Activated CD8-positive, alpha-beta T cell treated with anti-CD3 and anti-CD28 coated beads for 36 hours (primary cell): ENCODE measurements at regions of chr16 and their contacts with region 1.

Region 1: DNA sequence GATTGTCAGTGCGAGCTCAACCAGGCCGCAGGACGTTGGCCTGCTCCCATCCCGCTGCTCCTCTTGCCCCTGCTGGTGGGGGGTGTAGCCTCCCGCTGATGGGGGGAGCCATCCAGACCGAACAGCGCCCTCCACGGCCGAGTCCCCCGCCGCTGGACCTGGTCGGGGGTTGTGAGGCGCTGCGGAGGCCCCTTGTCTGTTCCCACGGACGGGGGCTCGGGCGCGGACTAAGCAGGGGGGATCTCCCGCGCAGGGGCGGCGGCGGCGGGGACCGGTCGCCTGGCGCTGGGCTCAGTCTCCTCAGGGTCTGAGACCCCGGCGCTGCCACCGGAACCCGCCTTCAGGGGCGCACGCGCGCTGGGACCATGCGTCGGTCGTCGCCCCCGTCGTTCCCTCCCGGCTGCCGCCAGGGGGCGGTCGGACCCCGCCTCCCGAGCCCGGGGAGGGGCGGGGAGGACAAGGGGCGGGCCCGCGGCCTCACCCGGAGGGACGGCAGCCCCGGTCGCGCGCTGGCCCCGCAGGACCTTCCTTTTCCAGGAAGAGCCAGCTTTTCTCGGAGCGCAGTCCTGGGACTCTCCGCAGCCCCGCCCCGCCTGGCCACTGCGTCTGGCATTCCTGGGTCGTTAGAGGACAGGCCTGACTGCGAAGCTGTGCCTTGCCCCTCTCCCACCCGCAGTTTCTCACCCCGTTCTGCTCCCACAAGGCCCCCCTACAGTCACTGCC is 6.3 kb upstream of the IL32 start:
- DNase-seq: peak; percentile 87
- ATAC-seq: peak; percentile 86
- H3K4me3 Mint-ChIP-seq: peak overlapping the region; percentile 82
- H3K27ac Mint-ChIP-seq: peak overlapping the region; percentile 93
- H3K4me1 Mint-ChIP-seq: peaks cover 57% of the 10 kb centered on the region
- H3K27me3 Mint-ChIP-seq: no peaks in the 10 kb centered on the region
- CTCF ChIP-seq: peak; percentile 98

Region 2: DNA sequence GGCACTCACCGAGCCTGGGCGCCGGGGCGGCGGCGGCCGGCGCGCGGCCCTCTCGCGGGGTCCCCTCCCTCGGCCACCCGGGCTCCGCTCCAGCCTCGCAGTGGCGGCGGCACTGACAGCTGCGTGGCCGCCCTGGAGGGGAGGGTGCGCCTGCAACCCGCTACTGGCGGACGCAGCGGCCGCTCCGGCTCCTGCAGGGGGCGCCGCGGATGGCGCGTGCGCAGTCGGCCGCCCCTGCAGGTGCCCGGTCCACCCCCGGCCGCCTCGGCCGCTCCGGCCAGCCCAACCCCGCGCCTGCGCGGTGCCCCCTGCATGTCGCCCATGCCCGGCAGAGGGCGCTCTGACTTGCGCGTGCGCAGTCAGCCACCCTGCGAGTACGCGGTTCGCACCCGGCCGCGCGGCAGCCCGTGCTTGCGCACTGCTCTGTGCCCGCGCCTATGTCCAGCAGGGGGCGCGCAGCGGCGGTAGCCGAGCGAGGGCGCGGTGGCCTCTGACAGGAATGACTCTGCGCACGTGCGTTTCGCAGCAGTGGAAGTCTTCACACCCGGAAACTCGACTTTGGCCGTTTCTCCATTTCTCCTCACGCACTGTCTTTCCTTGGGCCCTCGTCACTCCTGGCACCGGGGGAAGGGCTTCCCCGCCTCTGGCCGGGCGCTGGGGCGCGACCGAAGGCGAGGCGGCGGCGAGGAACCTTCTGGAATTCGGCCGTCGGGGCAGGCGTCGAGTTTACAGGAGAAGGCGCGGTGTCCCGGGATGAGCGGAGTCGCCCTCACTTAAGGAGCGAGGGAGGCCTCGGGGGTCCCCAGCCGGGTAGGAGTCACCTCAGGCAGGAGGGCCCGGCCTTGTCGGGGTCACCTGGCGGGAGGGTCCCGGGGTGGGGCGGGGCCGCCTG is 718.4 kb before region 1 on chr16 and contains the start of gene ABCA3:
- CTCF ChIA-PET with region 1: no interaction called
- POLR2A ChIA-PET with region 1: no interaction called
- intact Hi-C with region 1: no loop called
- DNase-seq: peak; percentile 94
- ATAC-seq: peak; percentile 89
- H3K4me3 Mint-ChIP-seq: peak within 1 kb of the TSS; percentile 78
- H3K27ac Mint-ChIP-seq: peak within 1 kb of the TSS; percentile 59
- H3K4me1 Mint-ChIP-seq: peaks cover 20% of the 10 kb centered on the region
- H3K27me3 Mint-ChIP-seq: peaks cover 8% of the 10 kb centered on the region
- CTCF ChIP-seq: peak; percentile 100
- total RNA-seq, gene ABCA3: 2.9 to 3.6 TPM

Region 3: GRCh38 chr16:3023669-3024478 is 35.3 kb before region 1 on chr16 and contains the starts of genes HCFC1R1 and THOC6:
- CTCF ChIA-PET with region 1: interaction called, 64 read pairs
- POLR2A ChIA-PET with region 1: interaction called, 4 read pairs
- intact Hi-C with region 1: no loop called
- DNase-seq: peak; percentile 99
- ATAC-seq: peak; percentile 70
- H3K4me3 Mint-ChIP-seq: peak within 1 kb of the TSS; percentile 77
- H3K27ac Mint-ChIP-seq: peak within 1 kb of the TSS; percentile 97
- H3K4me1 Mint-ChIP-seq: peaks cover 50% of the 10 kb centered on the region
- H3K27me3 Mint-ChIP-seq: peaks cover 7% of the 10 kb centered on the region
- CTCF ChIP-seq: no peak
- total RNA-seq, gene HCFC1R1: 24.2 to 24.8 TPM
- total RNA-seq, gene THOC6: 55.4 to 56.6 TPM

Region 4: DNA sequence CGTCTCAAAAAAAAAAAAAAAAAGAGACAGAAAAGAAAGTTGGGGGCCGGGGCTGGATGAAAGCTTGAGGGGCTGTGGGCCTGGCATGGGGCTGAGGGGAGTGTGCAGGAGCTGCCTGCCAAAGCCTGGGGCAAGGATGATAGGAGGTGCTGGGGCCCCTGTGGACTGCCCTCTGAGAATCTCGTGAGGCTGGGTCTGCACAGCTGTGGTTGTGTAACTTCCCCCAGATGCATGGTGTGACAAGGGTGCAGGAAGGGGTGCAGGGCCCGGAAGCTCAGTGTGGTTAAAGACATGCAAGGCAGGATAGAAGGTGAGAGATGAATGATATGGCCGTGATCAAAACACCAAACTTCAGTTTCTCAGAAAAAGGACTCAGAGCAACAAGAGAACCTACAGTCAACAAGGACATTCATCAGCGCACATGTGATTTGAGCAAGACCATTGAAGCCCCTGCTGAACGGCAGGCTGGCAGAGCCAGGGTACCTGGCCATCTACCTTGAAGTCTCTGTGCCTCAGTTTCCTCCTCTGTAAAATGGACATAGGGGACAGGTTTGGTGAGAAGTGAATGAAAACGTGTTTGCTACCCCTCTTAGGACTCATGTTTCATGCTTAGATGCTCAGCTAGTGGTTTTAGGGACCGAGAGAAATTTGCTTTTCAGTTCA is 15.8 kb after region 1 on chr16:
- CTCF ChIA-PET with region 1: interaction called, 17 read pairs
- POLR2A ChIA-PET with region 1: interaction called, 27 read pairs
- intact Hi-C with region 1: no loop called
- DNase-seq: peak; percentile 93
- ATAC-seq: peak; percentile 75
- H3K4me3 Mint-ChIP-seq: peak overlapping the region; percentile 60
- H3K27ac Mint-ChIP-seq: peak overlapping the region; percentile 97
- H3K4me1 Mint-ChIP-seq: peaks cover 75% of the 10 kb centered on the region
- H3K27me3 Mint-ChIP-seq: no peaks in the 10 kb centered on the region
- CTCF ChIP-seq: no peak

Region 5: DNA sequence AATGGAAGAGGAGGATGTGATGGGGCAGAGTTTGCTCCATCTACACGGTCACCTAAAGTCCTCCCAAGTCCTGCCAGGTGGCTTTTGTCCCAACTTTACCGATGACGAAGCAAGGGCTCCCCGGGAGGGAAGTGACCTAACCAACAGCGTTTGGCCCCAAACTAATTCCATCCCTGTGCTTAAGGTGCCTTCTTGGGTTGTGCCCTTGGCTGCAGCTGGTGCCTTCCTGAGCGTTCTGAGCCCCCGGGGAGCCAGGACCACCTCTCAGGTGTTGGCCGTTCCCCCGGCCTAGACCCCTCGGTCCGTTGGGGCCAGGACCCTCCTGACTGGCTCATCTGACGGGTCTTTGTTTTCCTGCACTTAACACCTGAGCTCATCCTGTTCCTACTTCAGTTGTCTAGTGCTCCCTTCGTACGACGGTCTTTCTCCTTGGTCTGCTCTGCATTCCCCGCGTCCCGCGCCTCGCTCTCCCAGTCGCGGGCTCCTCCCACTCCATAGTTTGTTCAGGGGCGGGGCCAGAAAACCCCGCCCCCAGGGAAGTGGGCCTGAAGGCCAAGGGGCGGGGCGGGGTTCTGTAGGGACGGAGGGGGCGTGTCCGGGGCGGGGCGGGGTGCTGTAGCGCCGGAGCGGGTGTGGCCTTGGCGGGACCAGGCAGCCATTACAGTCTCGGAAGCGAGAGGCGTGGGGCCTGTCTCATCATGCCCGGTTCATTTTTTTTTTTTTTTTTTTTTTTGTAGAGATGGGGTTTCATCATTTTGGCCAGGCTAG is 40.8 kb after region 1 on chr16:
- CTCF ChIA-PET with region 1: interaction called, 23 read pairs
- POLR2A ChIA-PET with region 1: interaction called, 4 read pairs
- intact Hi-C with region 1: no loop called
- DNase-seq: peak; percentile 98
- ATAC-seq: peak; percentile 92
- H3K4me3 Mint-ChIP-seq: peak overlapping the region; percentile 62
- H3K27ac Mint-ChIP-seq: peak overlapping the region; percentile 83
- H3K4me1 Mint-ChIP-seq: peaks cover 31% of the 10 kb centered on the region
- H3K27me3 Mint-ChIP-seq: no peaks in the 10 kb centered on the region
- CTCF ChIP-seq: no peak

Region 6: DNA sequence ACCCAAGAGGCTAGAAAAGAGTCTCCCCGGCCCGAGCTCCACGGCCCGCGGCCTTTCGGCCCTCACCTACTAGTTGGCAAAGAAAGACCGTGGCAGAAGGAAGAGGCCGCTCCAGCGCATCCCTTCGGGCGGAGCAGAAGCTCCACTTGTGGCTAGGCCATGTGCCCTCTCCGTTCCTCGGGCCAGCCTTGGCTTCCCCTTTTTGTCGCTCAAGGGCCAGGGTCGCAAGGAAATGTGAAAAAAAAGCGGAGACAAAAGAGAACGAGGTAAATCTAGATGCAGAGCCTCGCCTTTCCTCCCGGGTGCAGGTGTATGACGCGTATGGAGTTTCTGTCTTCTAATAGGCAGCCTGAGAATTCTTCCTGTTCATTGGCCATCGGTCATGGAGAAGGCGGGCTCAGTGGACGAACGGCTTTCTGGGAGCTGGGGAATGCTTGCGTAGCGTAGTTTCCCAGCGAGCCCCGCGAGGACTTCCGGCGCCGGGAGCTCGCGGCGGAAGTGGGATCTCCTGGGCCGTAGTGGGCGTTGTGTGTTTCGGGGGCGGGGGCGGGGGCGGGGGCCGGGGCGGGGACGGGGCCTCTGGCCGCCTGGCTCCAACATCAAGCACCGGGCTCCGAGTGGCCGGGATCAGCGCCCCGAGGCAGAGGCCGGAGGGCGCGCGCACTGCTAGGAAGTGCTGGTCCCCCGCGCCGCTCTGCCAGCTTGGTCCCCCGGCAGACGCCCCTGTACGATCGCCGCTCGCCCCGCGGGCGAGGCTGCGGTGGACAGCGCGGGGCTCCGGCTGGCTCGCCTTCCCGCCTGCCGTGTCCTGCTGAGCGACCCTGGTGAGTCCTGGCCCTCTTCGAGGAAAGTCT is 75.6 kb after region 1 on chr16 and contains the start of gene ZNF213:
- CTCF ChIA-PET with region 1: interaction called, 288 read pairs
- POLR2A ChIA-PET with region 1: interaction called, 22 read pairs
- intact Hi-C with region 1: no loop called
- DNase-seq: peak; percentile 97
- ATAC-seq: peak; percentile 98
- H3K4me3 Mint-ChIP-seq: peak within 1 kb of the TSS; percentile 99
- H3K27ac Mint-ChIP-seq: peak within 1 kb of the TSS; percentile 98
- H3K4me1 Mint-ChIP-seq: peaks cover 14% of the 10 kb centered on the region
- H3K27me3 Mint-ChIP-seq: no peaks in the 10 kb centered on the region
- CTCF ChIP-seq: no peak
- total RNA-seq, gene ZNF213: 6.1 to 7.5 TPM

Region 7: DNA sequence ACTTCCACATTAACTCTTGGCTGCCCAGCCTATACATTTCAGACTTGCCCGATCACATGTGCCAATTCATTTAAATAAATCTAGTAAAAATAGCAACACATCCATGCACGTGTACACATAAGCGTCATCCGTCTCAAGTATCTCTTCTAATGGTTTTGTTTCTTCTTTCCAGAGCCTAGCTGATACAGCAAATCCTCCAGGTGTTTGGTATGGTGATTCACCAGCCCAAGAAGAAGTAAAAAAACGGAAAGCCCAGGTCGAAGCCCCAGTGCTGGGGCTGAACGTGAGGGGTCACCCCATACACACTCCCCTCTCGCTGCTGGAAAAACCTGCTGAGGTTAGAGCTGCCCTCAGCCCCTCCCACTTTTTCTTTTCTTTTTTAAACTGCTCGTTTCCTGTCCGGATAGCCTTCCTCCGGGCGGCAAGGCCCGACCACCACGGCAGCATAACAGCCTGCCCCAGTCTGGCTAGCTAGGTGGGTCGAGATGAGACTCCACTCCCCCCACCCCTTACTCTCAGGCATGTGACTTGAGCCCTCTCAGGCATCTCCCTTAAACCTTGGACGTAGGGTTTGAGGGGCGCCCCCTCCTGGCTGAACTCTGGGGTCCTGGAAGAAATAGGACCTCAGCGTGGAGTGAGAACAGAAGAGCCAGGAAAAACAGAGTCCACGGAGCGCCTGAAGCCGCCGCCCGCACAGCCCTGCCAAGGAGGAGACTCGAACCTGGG is 114.9 kb after region 1 on chr16:
- CTCF ChIA-PET with region 1: interaction called, 14 read pairs
- POLR2A ChIA-PET with region 1: interaction called, 3 read pairs
- intact Hi-C with region 1: no loop called
- DNase-seq: peak; percentile 71
- ATAC-seq: peak; percentile 28
- H3K4me3 Mint-ChIP-seq: peak overlapping the region; percentile 70
- H3K27ac Mint-ChIP-seq: peak overlapping the region; percentile 43
- H3K4me1 Mint-ChIP-seq: peaks cover 34% of the 10 kb centered on the region
- H3K27me3 Mint-ChIP-seq: peaks cover 45% of the 10 kb centered on the region
- CTCF ChIP-seq: peak; percentile 68